ENCODE measurements at regions of chr19 and their contacts with region 1.

Region 1: DNA sequence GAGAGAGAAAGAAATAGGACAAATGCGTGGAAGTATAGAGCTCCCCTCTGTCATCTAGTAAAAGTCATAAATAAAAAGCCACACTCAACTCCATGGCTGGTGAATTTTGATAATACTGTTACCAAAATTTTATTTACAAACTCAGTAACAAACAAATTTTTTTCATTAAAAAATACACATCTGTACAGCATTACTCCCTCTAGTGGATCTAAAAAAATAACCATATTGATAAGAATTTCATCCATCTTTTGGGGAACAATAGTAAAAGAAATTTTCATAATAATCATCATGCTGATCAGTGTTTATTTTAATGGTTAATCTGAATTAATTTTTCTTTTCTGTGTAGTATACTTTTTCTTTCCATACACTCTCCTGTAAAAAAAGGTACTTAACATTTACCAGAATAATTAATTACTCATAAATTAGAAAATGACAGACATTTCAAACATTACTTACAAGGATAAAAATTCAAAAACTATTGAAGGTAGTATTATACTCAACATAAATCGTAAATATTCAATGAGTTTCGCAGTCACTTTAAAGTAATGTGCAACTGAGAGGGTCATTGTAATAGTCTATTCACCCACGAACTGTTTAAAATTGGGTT is 173.5 kb upstream of the LSM14A start:
- DNase-seq: peak; percentile 5
- H3K4me3 Mint-ChIP-seq: no peak overlapping the region
- H3K27ac Mint-ChIP-seq: no peak overlapping the region
- H3K4me1 Mint-ChIP-seq: no peaks in the 10 kb centered on the region
- H3K27me3 Mint-ChIP-seq: peaks cover 19% of the 10 kb centered on the region
- CTCF ChIP-seq: peak; percentile 28

Region 2: DNA sequence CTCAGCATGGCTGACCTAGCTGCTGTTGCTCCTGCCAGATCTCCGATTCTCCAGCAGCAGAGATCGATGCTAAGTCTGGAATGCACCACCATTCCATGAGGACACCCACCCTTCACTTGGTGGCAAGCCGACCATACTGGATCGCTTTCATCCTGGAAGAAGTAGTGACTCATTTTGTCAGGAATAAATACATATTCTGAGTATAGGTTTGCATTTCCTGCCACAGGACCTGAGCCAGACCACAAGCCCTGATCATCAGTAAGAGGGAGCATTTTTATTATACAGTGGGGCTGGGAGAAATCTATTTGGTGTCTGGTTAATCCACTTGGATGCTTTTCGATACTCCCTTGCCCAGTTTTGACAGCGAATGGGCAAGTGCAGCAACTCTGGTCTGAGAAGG is 213.0 kb before region 1 on chr19:
- CTCF ChIA-PET with region 1: interaction called, 29 read pairs
- POLR2A ChIA-PET with region 1: no interaction called
- intact Hi-C with region 1: no loop called
- DNase-seq: peak; percentile 38
- H3K4me3 Mint-ChIP-seq: no peak overlapping the region
- H3K27ac Mint-ChIP-seq: no peak overlapping the region
- H3K4me1 Mint-ChIP-seq: no peaks in the 10 kb centered on the region
- H3K27me3 Mint-ChIP-seq: peaks cover 11% of the 10 kb centered on the region
- CTCF ChIP-seq: no peak

Region 3: GRCh38 chr19:33819880-33820781 is 178.7 kb before region 1 on chr19:
- CTCF ChIA-PET with region 1: interaction called, 15 read pairs
- POLR2A ChIA-PET with region 1: interaction called, 7 read pairs
- intact Hi-C with region 1: no loop called
- DNase-seq: peak; percentile 99
- H3K4me3 Mint-ChIP-seq: peak overlapping the region; percentile 70
- H3K27ac Mint-ChIP-seq: peak overlapping the region; percentile 35
- H3K4me1 Mint-ChIP-seq: peaks cover 8% of the 10 kb centered on the region
- H3K27me3 Mint-ChIP-seq: no peaks in the 10 kb centered on the region
- CTCF ChIP-seq: no peak

Region 4: GRCh38 chr19:33982706-33983105 is 16.1 kb before region 1 on chr19:
- CTCF ChIA-PET with region 1: interaction called, 16 read pairs
- POLR2A ChIA-PET with region 1: no interaction called
- intact Hi-C with region 1: no loop called
- DNase-seq: no peak
- H3K4me3 Mint-ChIP-seq: no peak overlapping the region
- H3K27ac Mint-ChIP-seq: no peak overlapping the region
- H3K4me1 Mint-ChIP-seq: no peaks in the 10 kb centered on the region
- H3K27me3 Mint-ChIP-seq: peaks cover 11% of the 10 kb centered on the region
- CTCF ChIP-seq: no peak

Region 5: GRCh38 chr19:34041925-34042521 is 43.2 kb after region 1 on chr19:
- CTCF ChIA-PET with region 1: interaction called, 13 read pairs
- POLR2A ChIA-PET with region 1: no interaction called
- intact Hi-C with region 1: no loop called
- DNase-seq: peak; percentile 68
- H3K4me3 Mint-ChIP-seq: no peak overlapping the region
- H3K27ac Mint-ChIP-seq: no peak overlapping the region
- H3K4me1 Mint-ChIP-seq: no peaks in the 10 kb centered on the region
- H3K27me3 Mint-ChIP-seq: peaks cover 3% of the 10 kb centered on the region
- CTCF ChIP-seq: peak; percentile 64